H1 (cell line): ENCODE measurements at regions of chr12 and their contacts with region 1.

Region 1: GRCh38 chr12:132285991-132286681 is 43.3 kb downstream of the GALNT9 start:
- DNase-seq: peak in 1 of 2 experiments; percentile 69
- H3K4me3 ChIP-seq: peak overlapping the region in 2 of 4 experiments; percentile 4 to 49; a peak in 2 of 8 replicates
- H3K27ac ChIP-seq: no peak overlapping the region
- H3K4me1 ChIP-seq: peaks cover 5 to 39% (median 31%) of the 10 kb centered on the region in 4 experiments
- H3K27me3 ChIP-seq: peaks cover 0 to 15% (median 8%) of the 10 kb centered on the region in 4 experiments; a peak in 4 of 7 replicates
- CTCF ChIP-seq: 0 out of 4 replicates have a peak, but pooled peaks of 1 of the 3 experiments have one; percentile 23
- EP300 ChIP-seq: no peak
- POLR2A ChIP-seq: no peak
- RAD21 ChIP-seq: peak in 1 of 2 experiments; percentile 28; a peak in 1 of 4 replicates

Region 2: GRCh38 chr12:132189378-132190011 is 96.6 kb before region 1 on chr12:
- CTCF ChIA-PET with region 1: no interaction called
- POLR2A ChIA-PET with region 1: no interaction called
- DNase-seq: peak; percentile 33 to 84
- H3K4me3 ChIP-seq: peak overlapping the region; percentile 42 to 66 (median 42)
- H3K27ac ChIP-seq: no peak overlapping the region
- H3K4me1 ChIP-seq: peaks cover 0 to 13% (median 8%) of the 10 kb centered on the region in 4 experiments; a peak in 5 of 7 replicates
- H3K27me3 ChIP-seq: peaks cover 4 to 69% (median 43%) of the 10 kb centered on the region in 4 experiments
- CTCF ChIP-seq: no peak
- EP300 ChIP-seq: no peak
- POLR2A ChIP-seq: no peak
- RAD21 ChIP-seq: no peak; a peak in 1 of 4 replicates

Region 3: DNA sequence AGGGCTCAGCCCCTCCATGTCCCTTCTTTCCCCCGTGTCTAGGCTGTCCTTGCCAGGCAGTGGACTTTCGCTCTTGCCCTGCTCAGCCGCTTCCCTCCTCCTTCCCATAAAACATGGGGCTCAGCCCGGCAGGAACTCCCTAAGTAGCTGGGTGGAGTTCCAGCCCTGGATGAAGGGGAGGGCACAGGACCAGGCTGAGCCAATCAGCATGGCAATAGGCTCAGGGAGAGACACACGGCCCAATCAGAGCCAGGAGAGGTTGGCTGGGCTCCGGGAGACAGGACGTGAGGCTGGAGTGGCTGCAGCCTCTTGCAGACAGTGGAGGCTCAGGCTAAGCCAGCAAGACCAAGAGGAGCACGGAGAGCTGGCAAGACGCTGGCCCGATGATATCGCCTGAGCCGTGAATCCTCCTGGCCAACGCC is 11.0 kb before region 1 on chr12:
- CTCF ChIA-PET with region 1: interaction called, 36 read pairs
- POLR2A ChIA-PET with region 1: interaction called, 5 read pairs
- DNase-seq: peak in 1 of 2 experiments; percentile 64
- H3K4me3 ChIP-seq: 0 out of 8 replicates have a peak overlapping the region, but pooled peaks of 1 of the 4 experiments have one; percentile 14
- H3K27ac ChIP-seq: no peak overlapping the region
- H3K4me1 ChIP-seq: peaks cover 0 to 16% (median 12%) of the 10 kb centered on the region in 4 experiments; a peak in 6 of 7 replicates
- H3K27me3 ChIP-seq: peaks cover 0 to 8% (median 0%) of the 10 kb centered on the region in 4 experiments; a peak in 4 of 7 replicates
- CTCF ChIP-seq: no peak
- EP300 ChIP-seq: no peak
- POLR2A ChIP-seq: no peak
- RAD21 ChIP-seq: no peak

Region 4: DNA sequence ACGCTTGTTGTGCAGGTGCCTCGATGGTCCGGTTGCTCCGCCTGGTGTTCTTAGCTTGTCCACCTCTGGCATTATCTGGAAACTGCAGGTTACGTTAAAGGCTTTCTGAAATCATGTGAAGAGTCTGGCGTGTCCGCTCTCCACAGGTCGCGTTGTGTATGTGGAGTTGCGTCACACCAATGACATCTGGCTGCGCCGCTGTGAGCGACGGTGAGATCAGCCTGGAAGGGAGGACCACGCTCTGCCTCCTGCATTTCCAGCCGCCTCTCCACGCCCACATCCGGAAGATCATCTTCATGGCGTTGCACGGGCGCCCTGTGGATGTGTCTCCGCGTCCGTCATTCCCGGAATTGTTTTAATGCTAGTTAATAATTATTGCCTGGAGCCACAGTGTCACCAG is 93.9 kb after region 1 on chr12:
- CTCF ChIA-PET with region 1: interaction called, 10 read pairs
- POLR2A ChIA-PET with region 1: no interaction called
- DNase-seq: no peak
- H3K4me3 ChIP-seq: no peak overlapping the region
- H3K27ac ChIP-seq: no peak overlapping the region
- H3K4me1 ChIP-seq: peaks cover 0 to 14% (median 3%) of the 10 kb centered on the region in 4 experiments; a peak in 6 of 7 replicates
- H3K27me3 ChIP-seq: peaks cover 16 to 72% (median 54%) of the 10 kb centered on the region in 4 experiments
- CTCF ChIP-seq: no peak
- EP300 ChIP-seq: no peak
- POLR2A ChIP-seq: no peak
- RAD21 ChIP-seq: no peak